ENCODE measurements at regions of chr17 and their contacts with region 1.

Region 1: GRCh38 chr17:76868176-76868668 is at the start of gene MGAT5B:
- DNase-seq: peak; percentile 65 to 87 (median 75)
- H3K4me3 ChIP-seq: peak within 1 kb of the TSS; percentile 22
- H3K27ac ChIP-seq: no peak within 1 kb of the TSS
- H3K4me1 ChIP-seq: peaks cover 1% of the 10 kb centered on the region
- H3K27me3 ChIP-seq: peaks cover 9% of the 10 kb centered on the region
- CTCF ChIP-seq: peak; percentile 44 to 90 (median 86)
- EP300 ChIP-seq: no peak
- POLR2A ChIP-seq: no peak
- total RNA-seq, gene MGAT5B: 0.23 to 3.6 (median 0.92) TPM

Region 2: GRCh38 chr17:76924345-76925342 is 56.4 kb after region 1 on chr17:
- intact Hi-C with region 1: no loop called
- DNase-seq: no peak
- H3K4me3 ChIP-seq: no peak overlapping the region
- H3K27ac ChIP-seq: no peak overlapping the region
- H3K4me1 ChIP-seq: no peaks in the 10 kb centered on the region
- H3K27me3 ChIP-seq: no peaks in the 10 kb centered on the region
- CTCF ChIP-seq: no peak
- EP300 ChIP-seq: no peak
- POLR2A ChIP-seq: no peak

Region 3: DNA sequence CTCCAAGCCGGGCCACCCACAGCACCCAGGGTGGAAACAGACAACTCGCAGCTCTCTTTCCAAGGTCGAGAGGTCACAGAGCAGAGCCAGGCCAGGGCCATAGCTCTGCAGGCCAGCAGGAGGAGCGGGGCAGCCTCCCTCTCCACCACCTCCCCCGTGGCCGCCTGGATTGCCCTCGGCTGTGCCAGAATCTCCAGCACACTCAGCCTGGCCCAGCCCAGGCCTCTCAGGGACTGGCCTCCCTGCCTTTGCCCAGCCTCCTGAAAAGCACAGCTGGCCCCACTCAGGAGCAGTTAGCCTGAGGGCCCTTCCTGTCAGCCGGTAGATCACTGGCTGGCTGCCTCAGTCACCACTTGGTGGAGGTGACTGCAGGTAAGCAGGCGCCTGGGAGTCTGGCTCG is 186.7 kb after region 1 on chr17:
- intact Hi-C with region 1: loop called (anchors 5 to 10 kb)
- DNase-seq: no peak
- H3K4me3 ChIP-seq: no peak overlapping the region
- H3K27ac ChIP-seq: no peak overlapping the region
- H3K4me1 ChIP-seq: no peaks in the 10 kb centered on the region
- H3K27me3 ChIP-seq: no peaks in the 10 kb centered on the region
- CTCF ChIP-seq: no peak
- EP300 ChIP-seq: no peak
- POLR2A ChIP-seq: no peak

Region 4: GRCh38 chr17:77247048-77247541 is 378.9 kb after region 1 on chr17:
- intact Hi-C with region 1: loop called (anchors 5 to 10 kb)
- DNase-seq: peak; percentile 78 to 91 (median 88)
- H3K4me3 ChIP-seq: peak overlapping the region; percentile 38
- H3K27ac ChIP-seq: no peak overlapping the region
- H3K4me1 ChIP-seq: peaks cover 10% of the 10 kb centered on the region
- H3K27me3 ChIP-seq: no peaks in the 10 kb centered on the region
- CTCF ChIP-seq: peak; percentile 89 to 99 (median 97)
- EP300 ChIP-seq: no peak
- POLR2A ChIP-seq: no peak

Region 5: DNA sequence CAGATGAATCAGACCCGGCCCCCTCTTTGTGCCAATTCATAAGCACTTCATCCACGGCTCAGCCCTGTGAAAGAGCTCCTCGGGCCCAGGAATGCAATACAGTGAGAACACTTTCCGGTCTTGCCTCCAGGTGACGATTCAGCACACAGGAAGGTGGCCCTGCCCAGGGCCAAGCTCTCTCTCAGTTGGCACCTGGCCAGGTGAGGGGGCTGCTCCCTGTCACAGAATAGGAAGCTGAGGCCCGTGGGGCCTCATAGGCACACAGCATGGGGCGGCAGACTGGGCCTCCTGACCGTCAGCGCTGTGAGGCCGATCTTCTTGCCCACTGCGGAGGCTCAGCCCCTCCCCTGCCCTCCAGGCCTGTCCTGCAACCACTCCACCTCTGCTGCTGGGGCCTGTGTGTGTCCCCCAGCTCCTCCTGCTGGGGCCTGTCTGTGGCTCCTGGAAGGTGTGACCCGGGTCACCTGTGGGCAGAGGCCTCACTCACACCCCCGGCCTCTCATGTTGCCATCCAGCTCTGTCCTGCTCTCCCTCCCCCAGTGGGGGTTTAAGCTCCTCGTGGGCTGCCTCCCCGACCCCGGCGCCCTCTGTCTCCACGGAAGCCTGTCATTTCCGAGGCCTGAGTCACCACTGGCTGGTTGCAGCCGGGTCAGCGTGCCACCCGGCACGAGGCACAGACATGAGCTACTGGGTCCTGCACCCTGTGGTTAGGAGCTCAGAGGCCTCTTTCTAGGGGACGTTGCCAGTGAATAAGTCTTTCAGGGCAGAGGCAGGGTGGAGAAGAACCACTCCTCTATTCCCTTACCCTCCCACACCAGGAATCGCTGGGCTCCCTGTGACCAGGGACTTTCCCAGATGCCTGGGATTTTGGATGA is 387.0 kb after region 1 on chr17:
- intact Hi-C with region 1: loop called in 1 of 4 experiments (anchors 10 kb)
- DNase-seq: peak in 1 of 5 donors; percentile 27
- H3K4me3 ChIP-seq: no peak overlapping the region
- H3K27ac ChIP-seq: no peak overlapping the region
- H3K4me1 ChIP-seq: no peaks in the 10 kb centered on the region
- H3K27me3 ChIP-seq: no peaks in the 10 kb centered on the region
- CTCF ChIP-seq: no peak
- EP300 ChIP-seq: no peak
- POLR2A ChIP-seq: no peak